IMR-90 (cell line): ENCODE measurements at regions of chr2 and their contacts with region 1.

Region 1: GRCh38 chr2:11688222-11689069 is 18.5 kb upstream of the NTSR2 start:
- DNase-seq: peak; percentile 65
- ATAC-seq: peak; percentile 85
- H3K4me3 ChIP-seq: peak overlapping the region; percentile 6
- H3K27ac ChIP-seq: no peak overlapping the region
- H3K4me1 ChIP-seq: no peaks in the 10 kb centered on the region
- H3K27me3 ChIP-seq: peaks cover 23% of the 10 kb centered on the region
- CTCF ChIP-seq: peak; percentile 78
- POLR2A ChIP-seq: no peak
- RAD21 ChIP-seq: peak; percentile 68

Region 2: DNA sequence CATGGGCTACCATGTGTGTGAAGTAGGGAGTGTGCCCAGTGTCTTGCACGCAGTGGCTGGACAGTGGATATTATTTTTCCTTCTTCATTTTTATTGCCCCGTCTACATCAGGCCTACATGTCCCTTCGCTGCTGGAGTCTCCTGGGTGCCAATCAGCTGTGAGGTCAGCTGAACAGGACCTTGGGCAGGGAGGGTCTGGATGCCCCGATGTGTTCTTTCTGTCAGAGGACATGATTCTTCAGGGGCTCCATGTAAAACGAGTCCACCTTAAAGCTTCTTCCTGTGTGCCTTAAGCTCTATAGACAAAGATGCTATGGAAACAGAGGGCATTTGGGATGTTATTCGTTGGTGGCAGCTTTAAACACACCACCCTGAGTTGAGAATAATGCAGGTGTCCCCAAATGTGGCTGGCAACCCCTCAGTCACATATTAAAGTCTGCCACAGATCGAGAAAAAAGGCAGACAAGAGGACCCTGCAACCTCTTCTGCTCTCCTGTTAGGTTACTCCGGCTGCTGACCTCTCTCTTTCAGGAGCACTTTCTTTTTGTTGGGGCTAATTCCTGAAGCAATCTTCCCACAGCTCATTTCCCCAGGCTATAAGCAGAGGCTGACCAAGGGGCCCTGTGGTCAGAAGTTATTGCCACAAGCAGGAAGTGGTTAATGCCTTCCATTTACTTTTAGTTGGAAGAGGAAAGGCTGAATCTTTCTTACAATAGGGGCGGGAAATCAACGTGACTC is 134.6 kb before region 1 on chr2:
- CTCF ChIA-PET with region 1: no interaction called
- POLR2A ChIA-PET with region 1: no interaction called
- dilution Hi-C with region 1: no loop called
- in situ Hi-C with region 1: no loop called
- intact Hi-C with region 1: no loop called
- DNase-seq: peak; percentile 4
- ATAC-seq: no peak
- H3K4me3 ChIP-seq: no peak overlapping the region
- H3K27ac ChIP-seq: no peak overlapping the region
- H3K4me1 ChIP-seq: no peaks in the 10 kb centered on the region
- H3K27me3 ChIP-seq: peaks cover 45% of the 10 kb centered on the region
- CTCF ChIP-seq: no peak
- POLR2A ChIP-seq: no peak
- RAD21 ChIP-seq: no peak

Region 3: DNA sequence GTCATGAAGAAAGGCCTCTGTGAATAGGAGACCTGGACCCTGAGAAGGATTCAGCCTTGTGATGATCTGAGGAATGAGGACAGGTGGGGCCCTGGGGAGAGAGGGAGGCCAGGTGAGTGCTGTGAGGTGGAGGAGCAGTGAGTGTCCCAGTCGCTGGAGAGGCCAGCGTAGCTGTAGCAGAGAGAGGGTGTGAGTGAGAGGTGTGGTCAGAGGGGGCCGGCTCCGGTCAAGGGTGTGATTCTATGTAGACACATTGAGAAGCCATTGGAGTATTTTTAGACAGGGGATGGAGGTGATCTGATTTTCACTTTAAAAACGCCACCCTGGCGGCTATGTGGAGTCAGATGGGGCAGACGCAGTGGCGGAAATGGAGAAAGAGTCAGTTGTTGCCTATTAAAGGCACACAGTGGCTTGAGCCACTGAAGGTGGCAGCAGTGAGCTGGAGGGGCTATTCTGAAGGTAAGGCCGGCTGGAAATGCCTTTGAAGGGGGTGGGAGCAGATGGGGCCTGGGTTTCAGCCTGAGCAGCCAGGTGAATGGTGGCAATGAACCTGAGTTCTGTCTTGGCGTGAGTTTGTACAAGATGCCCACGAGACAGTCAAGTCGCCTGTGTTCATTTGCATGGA is 99.0 kb before region 1 on chr2:
- CTCF ChIA-PET with region 1: no interaction called
- POLR2A ChIA-PET with region 1: no interaction called
- dilution Hi-C with region 1: no loop called
- in situ Hi-C with region 1: no loop called
- intact Hi-C with region 1: loop called (anchors 5 kb)
- DNase-seq: no peak
- ATAC-seq: no peak
- H3K4me3 ChIP-seq: no peak overlapping the region
- H3K27ac ChIP-seq: no peak overlapping the region
- H3K4me1 ChIP-seq: no peaks in the 10 kb centered on the region
- H3K27me3 ChIP-seq: peaks cover 40% of the 10 kb centered on the region
- CTCF ChIP-seq: no peak
- POLR2A ChIP-seq: no peak
- RAD21 ChIP-seq: no peak

Region 4: GRCh38 chr2:11621410-11621809 is 67.0 kb before region 1 on chr2:
- CTCF ChIA-PET with region 1: no interaction called
- POLR2A ChIA-PET with region 1: no interaction called
- dilution Hi-C with region 1: no loop called
- in situ Hi-C with region 1: no loop called
- intact Hi-C with region 1: no loop called
- DNase-seq: no peak
- ATAC-seq: no peak
- H3K4me3 ChIP-seq: no peak overlapping the region
- H3K27ac ChIP-seq: no peak overlapping the region
- H3K4me1 ChIP-seq: no peaks in the 10 kb centered on the region
- H3K27me3 ChIP-seq: peaks cover 24% of the 10 kb centered on the region
- CTCF ChIP-seq: no peak
- POLR2A ChIP-seq: no peak
- RAD21 ChIP-seq: no peak

Region 5: DNA sequence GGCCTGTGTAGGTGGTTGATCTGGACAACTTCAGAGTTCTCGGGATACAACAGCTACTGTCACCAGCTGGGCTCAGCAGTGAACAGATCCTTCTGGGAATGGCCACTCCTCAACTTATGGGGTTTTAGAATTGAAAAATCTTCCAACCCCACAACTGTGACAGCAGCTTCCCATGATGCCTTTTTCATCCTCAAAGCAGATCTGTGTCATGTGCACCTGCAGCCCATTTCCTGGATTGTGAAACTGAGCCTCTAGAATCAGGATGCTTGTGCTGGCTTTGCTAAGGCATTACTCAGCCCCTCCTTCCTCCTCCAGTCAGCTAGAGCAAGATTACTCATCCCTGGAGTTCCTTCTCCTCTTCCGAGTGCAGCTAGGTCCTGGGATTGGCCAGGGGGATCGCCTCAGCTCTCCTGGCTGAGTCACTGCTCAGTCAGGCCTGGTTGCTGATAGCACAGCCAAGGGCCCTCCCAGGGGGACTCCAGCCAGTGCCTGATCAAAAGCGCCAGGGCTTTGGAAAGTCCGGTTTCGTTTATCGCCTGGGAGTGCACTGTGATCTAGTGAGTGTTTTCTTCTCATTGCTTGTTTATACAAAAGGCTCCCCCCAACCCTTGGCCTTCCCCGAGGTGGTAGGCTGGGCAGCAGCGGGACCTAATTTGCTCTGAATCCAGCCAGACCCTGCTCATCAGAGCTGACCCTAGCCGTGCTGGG is 55.6 kb after region 1 on chr2:
- CTCF ChIA-PET with region 1: interaction called, 6 read pairs
- POLR2A ChIA-PET with region 1: no interaction called
- dilution Hi-C with region 1: no loop called
- in situ Hi-C with region 1: no loop called
- intact Hi-C with region 1: loop called (anchors 2 kb)
- DNase-seq: peak; percentile 100
- ATAC-seq: peak; percentile 87
- H3K4me3 ChIP-seq: peak overlapping the region; percentile 10
- H3K27ac ChIP-seq: peak overlapping the region; percentile 88
- H3K4me1 ChIP-seq: peaks cover 16% of the 10 kb centered on the region
- H3K27me3 ChIP-seq: no peaks in the 10 kb centered on the region
- CTCF ChIP-seq: no peak
- POLR2A ChIP-seq: no peak
- RAD21 ChIP-seq: no peak

Region 6: GRCh38 chr2:11778923-11779757 is 90.7 kb after region 1 on chr2:
- CTCF ChIA-PET with region 1: interaction called, 8 read pairs
- POLR2A ChIA-PET with region 1: no interaction called
- dilution Hi-C with region 1: no loop called
- in situ Hi-C with region 1: loop called (anchors 5 kb)
- intact Hi-C with region 1: loop called (anchors 1 kb)
- DNase-seq: peak; percentile 48
- ATAC-seq: peak; percentile 92
- H3K4me3 ChIP-seq: no peak overlapping the region
- H3K27ac ChIP-seq: no peak overlapping the region
- H3K4me1 ChIP-seq: peaks cover 5% of the 10 kb centered on the region
- H3K27me3 ChIP-seq: no peaks in the 10 kb centered on the region
- CTCF ChIP-seq: peak; percentile 97
- POLR2A ChIP-seq: no peak
- RAD21 ChIP-seq: peak; percentile 95

Region 7: GRCh38 chr2:11784747-11785610 is 96.5 kb after region 1 on chr2:
- CTCF ChIA-PET with region 1: interaction called, 5 read pairs
- POLR2A ChIA-PET with region 1: no interaction called
- dilution Hi-C with region 1: no loop called
- in situ Hi-C with region 1: loop called (anchors 5 kb)
- intact Hi-C with region 1: no loop called
- DNase-seq: peak; percentile 63
- ATAC-seq: peak; percentile 91
- H3K4me3 ChIP-seq: peak overlapping the region; percentile 43
- H3K27ac ChIP-seq: no peak overlapping the region
- H3K4me1 ChIP-seq: no peaks in the 10 kb centered on the region
- H3K27me3 ChIP-seq: no peaks in the 10 kb centered on the region
- CTCF ChIP-seq: peak; percentile 71
- POLR2A ChIP-seq: no peak
- RAD21 ChIP-seq: peak; percentile 43; the same call in 1 of the 2 replicates